ENCODE measurements at regions of chr5 and their contacts with region 1.

Region 1: DNA sequence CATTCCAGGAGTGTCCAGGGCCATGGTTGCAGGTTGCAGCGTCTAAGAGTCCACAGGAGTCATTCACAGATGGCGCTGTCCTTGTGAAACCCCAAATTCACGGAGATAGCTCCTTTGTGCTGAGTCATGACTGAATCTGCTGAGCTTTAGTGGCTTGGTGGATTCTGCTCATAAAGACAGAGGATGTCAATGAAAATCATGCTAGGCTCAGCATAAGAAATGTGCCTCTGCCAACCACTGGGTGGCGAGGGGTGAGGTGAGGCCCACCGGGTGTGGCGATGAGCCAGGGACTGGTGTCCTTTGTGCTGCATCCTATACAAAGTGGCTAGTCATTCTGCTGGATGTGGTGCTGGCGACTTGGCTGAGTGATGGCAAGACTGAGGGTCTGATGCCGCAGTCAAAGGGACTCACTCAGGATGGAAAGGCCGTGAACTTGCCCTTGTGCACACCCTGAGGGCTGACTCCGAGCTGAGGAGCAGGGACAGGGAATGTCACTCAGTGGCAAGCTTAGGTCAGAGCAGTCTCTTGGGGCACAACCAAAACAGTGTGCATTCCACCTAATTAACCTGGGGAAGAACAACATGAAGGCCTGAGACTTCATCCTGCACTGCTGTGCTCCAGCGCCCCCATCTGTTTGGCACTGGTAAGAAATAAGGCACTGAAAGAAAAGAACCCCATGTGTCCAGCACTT is 71.5 kb downstream of the DAP start:
- DNase-seq: no peak
- H3K4me3 Mint-ChIP-seq: no peak overlapping the region
- H3K27ac Mint-ChIP-seq: no peak overlapping the region
- H3K4me1 Mint-ChIP-seq: no peaks in the 10 kb centered on the region
- H3K27me3 Mint-ChIP-seq: no peaks in the 10 kb centered on the region

Region 2: DNA sequence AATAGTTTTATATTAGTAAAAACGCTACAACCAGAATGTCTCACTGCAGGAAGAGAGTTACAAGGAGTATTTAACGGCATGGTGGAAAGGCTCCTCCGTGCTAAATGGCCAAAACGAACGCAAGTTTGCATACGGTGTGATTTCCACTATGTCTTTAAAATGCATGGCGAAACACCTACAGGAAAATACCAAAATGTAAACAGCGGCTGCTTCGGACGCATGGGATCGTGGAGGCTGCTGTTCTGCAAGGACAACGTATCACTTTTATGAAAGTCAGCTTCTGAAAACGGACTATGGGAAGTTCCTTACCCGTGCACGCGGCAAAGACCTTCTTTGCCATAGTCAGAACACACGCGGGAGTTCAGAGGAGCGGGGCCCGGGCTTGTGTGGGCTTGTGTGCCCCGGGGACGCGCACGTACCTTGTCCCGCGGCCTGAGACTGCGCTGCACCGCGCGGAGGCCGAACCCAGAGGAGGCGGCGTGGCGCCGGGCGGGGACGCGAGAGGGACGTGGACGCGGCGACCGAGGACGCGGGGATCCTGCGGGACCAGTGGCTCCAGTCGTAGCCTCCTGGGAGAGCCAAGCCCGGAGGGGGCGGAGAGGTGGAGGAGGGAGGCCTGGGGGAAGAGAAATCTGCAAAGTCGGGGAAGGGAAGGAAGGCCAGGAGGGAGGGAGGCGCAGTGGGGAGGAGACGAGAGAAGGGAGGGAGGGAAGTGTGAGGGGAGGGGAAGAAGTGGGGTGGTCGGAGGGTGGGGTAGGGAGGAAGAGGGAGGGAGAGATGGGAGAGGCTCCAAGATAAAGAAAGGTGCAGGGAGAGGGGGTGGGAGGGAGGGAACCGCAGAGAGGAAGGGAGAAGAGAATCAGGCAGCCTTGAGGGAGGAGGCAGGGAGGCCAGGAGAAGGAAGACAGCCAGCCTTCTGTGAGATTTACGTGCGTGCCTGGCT is 382.1 kb before region 1 on chr5 and contains the start of gene CMBL:
- intact Hi-C with region 1: loop called (anchors 10 kb)
- DNase-seq: no peak
- H3K4me3 Mint-ChIP-seq: peak within 1 kb of the TSS; percentile 73
- H3K27ac Mint-ChIP-seq: no peak within 1 kb of the TSS
- H3K4me1 Mint-ChIP-seq: peaks cover 7% of the 10 kb centered on the region
- H3K27me3 Mint-ChIP-seq: peaks cover 37% of the 10 kb centered on the region
- total RNA-seq, gene CMBL: 0.23 and 0.25 TPM in 2 replicates

Region 3: DNA sequence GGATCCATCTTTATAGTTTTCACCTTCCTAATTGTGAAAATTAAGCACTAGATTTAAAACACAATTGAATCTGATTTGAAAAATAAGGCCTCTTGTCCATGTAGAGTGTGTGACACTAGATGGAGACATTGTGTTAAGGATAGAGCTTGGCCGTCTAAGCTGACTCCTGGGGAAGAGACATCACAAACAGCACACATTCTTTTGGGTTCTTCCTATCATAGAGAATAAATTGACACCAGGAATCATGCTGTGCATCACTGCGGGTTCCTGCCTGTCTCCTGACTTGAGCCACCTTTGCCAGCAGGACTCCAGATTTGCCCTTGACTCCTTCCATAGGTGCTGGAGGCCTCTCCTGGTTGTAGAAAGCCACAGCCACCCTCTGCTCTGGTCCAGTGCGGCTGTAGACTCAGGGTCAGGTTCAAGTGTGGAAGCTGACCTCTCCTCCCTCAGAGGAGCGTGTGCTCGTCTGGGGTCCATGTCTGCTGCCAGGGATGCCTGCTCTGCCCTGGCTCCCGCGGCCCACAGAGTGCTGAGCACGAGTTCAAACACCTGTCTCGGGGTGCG is 236.7 kb before region 1 on chr5:
- intact Hi-C with region 1: loop called (anchors 1 kb)
- DNase-seq: no peak
- H3K4me3 Mint-ChIP-seq: no peak overlapping the region
- H3K27ac Mint-ChIP-seq: no peak overlapping the region
- H3K4me1 Mint-ChIP-seq: peaks cover 8% of the 10 kb centered on the region
- H3K27me3 Mint-ChIP-seq: no peaks in the 10 kb centered on the region

Region 4: GRCh38 chr5:10724799-10725507 is 35.4 kb after region 1 on chr5:
- intact Hi-C with region 1: no loop called
- DNase-seq: no peak
- H3K4me3 Mint-ChIP-seq: no peak overlapping the region
- H3K27ac Mint-ChIP-seq: no peak overlapping the region
- H3K4me1 Mint-ChIP-seq: peaks cover 13% of the 10 kb centered on the region
- H3K27me3 Mint-ChIP-seq: no peaks in the 10 kb centered on the region

Region 5: GRCh38 chr5:10838038-10838437 is 148.5 kb after region 1 on chr5:
- intact Hi-C with region 1: no loop called
- DNase-seq: no peak
- H3K4me3 Mint-ChIP-seq: no peak overlapping the region
- H3K27ac Mint-ChIP-seq: no peak overlapping the region
- H3K4me1 Mint-ChIP-seq: no peaks in the 10 kb centered on the region
- H3K27me3 Mint-ChIP-seq: no peaks in the 10 kb centered on the region

Measured in activated T-helper 2 cell treated with anti-CD3 and anti-CD28 coated beads, Interferon-gamma antibody, Interleukin-2, Interleukin-4, amounts not matched to agents 10 μg/mL and 5 μg/mL and 100 μg/mL, durations not matched to agents 14 hours and 24 hours and 36 hours (primary cell).